GM10248 (cell line): ENCODE measurements at regions of chr2 and their contacts with region 1.

Region 1: DNA sequence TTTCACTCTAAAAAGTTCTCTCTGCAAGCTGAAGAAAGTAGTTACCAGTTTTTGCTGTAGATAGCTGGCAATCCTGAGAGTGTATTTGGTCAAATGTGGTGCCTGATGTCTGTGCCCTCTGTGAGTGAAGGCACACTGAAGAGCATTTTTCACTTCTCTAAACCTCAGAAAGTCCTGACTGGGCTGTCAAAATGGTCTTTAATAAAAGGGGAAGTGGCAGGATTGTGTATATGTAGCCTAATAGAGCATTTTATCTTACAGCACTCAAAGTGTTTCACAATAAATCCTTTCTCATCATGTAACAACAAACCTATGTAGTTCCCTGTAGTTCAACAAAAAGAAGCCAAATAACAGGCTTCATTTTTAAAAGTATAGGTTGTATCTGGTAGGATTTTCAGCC is 1552.3 kb upstream of the SLC39A10 start:
- DNase-seq: peak; percentile 23
- CTCF ChIP-seq: no peak

Region 2: DNA sequence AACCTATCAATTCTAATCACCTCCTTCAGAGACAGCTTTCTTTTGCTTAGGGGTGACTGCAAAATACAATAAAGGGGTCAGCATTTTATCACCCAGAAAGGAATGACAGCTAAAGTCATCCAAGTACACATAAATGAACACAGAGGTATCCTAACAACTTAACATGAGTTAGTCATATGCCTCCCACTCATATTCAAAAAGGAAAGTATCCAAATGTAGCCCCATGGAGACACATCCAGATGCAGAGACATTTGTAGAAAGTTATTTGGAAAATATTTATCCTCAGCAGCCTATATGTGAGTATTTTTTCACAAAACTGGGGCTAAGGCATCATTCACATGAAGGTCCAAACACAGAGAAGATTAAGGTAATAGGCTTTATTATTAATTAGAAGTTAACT is 27.3 kb before region 1 on chr2:
- CTCF ChIA-PET with region 1: no interaction called
- POLR2A ChIA-PET with region 1: no interaction called
- DNase-seq: no peak
- CTCF ChIP-seq: no peak

Region 3: GRCh38 chr2:194116861-194117260 is 12.2 kb after region 1 on chr2:
- CTCF ChIA-PET with region 1: interaction called, 12 read pairs
- POLR2A ChIA-PET with region 1: no interaction called
- DNase-seq: no peak
- CTCF ChIP-seq: no peak

Region 4: DNA sequence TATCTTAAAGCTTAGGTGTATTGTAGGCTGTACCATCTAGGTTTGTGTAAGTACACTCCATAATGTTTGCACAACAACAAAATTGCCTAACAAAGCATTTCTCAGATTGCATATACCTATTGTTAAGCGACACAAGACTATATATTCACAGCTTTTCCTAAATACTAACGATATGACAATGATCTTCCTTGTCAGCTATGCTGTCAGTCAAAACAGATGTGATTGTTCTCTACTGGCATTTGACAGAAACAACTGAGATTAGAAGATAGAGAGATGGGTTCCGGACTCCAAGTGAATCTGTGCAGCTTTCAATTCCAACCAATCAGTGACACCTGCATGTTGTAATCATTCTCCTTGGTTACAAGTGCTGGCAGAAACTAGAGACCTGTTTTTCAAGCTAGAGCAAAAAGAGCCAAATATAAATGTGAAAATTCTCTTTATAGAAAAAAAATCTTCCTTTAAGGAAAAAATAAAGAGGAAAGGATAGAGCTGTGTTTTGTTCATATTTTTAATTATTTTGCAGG is 320.1 kb after region 1 on chr2:
- CTCF ChIA-PET with region 1: no interaction called
- POLR2A ChIA-PET with region 1: no interaction called
- DNase-seq: no peak
- CTCF ChIP-seq: no peak